PC-9 (cell line): ENCODE measurements at regions of chr11 and their contacts with region 1.

Region 1: DNA sequence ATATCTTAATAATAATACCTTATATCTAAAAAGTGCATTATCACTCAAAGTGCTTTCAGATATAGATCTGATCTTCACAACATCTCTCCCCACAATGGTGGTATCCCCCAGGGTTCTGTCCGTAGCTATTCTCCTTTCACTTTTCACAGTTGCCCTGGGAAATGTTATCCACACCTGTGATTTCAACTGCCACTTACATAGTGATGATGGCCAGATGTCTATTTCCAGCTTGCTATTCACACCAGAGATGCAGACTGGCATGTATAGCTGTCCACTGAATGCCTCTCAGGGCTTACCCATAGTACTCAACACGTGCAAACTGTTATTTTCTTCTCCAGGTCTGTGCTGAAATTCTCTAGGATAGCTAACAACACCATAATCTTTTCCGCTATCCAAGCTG is 724.7 kb downstream of the DLG2 start:
- DNase-seq: no peak
- H3K4me3 ChIP-seq: no peak overlapping the region
- H3K27ac ChIP-seq: no peak overlapping the region
- H3K4me1 ChIP-seq: no peaks in the 10 kb centered on the region
- H3K27me3 ChIP-seq: no peaks in the 10 kb centered on the region
- CTCF ChIP-seq: no peak

Region 2: GRCh38 chr11:85475660-85476517 is 573.4 kb after region 1 on chr11:
- CTCF ChIA-PET with region 1: no interaction called
- POLR2A ChIA-PET with region 1: interaction called, 10 read pairs
- intact Hi-C with region 1: no loop called
- DNase-seq: no peak
- H3K4me3 ChIP-seq: no peak overlapping the region
- H3K27ac ChIP-seq: no peak overlapping the region
- H3K4me1 ChIP-seq: no peaks in the 10 kb centered on the region
- H3K27me3 ChIP-seq: no peaks in the 10 kb centered on the region
- CTCF ChIP-seq: no peak